ENCODE measurements at regions of chr3 and their contacts with region 1.

Region 1: DNA sequence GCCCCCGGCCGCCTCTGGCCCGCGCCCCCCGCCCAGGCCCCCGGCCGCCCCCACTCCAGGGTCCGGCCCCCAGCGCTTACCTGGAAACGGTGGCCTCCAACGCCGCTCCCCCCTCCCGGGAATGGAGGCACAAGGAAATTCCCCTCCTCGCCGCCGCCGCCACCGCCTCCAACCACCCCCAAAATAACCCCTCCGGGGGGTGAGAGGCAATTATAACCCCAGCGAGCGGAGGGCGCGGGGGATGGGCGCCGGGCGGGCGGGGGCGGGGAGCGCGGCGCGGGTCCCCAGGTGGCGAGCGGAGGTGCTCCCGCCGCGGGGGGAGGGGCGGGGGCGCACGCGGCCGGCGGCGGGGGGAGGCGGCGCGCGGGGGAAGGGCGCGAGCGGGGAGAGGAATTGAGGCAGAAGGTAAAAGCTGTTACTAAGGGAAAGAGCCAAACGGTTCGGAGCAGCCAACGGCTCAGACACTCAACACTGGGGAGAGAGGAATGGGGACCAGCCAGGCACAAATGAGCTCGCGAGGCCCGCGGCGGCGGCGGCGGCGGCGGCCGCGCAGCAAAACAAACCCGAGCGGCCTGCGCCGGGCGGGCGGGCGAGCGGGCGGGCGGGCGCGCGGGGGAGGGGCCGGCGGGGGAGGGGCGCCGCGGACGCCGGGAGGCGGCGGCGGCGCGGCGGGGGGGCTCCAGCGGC is at the start of gene TBL1XR1:
- DNase-seq: peak; percentile 90 to 94
- ATAC-seq: peak; percentile 79 to 91 (median 88)
- H3K4me3 ChIP-seq: peak within 1 kb of the TSS; percentile 64 to 92 (median 84)
- H3K27ac ChIP-seq: peak within 1 kb of the TSS; percentile 96 to 99 (median 98)
- H3K4me1 ChIP-seq: peaks cover 0 to 65% (median 25%) of the 10 kb centered on the region in 9 donors
- H3K27me3 ChIP-seq: no peaks in the 10 kb centered on the region
- CTCF ChIP-seq: no peak
- total RNA-seq, gene TBL1XR1: 79.6 to 184 (median 129) TPM

Region 2: GRCh38 chr3:176872771-176873209 is 324.4 kb before region 1 on chr3:
- intact Hi-C with region 1: no loop called
- DNase-seq: peak in 1 of 2 donors; percentile 45
- ATAC-seq: peak in 7 of 8 donors; percentile 61 to 75 (median 75)
- H3K4me3 ChIP-seq: no peak overlapping the region
- H3K27ac ChIP-seq: no peak overlapping the region
- H3K4me1 ChIP-seq: peaks cover 0 to 11% (median 0%) of the 10 kb centered on the region in 9 donors
- H3K27me3 ChIP-seq: no peaks in the 10 kb centered on the region
- CTCF ChIP-seq: peak; percentile 52 to 80 (median 72)

Region 3: GRCh38 chr3:177050501-177051237 is 146.5 kb before region 1 on chr3:
- intact Hi-C with region 1: loop called in 8 of 10 experiments (anchors 2 to 10 kb)
- DNase-seq: no peak
- ATAC-seq: peak in 7 of 8 donors; percentile 48 to 87 (median 65)
- H3K4me3 ChIP-seq: no peak overlapping the region
- H3K27ac ChIP-seq: no peak overlapping the region
- H3K4me1 ChIP-seq: peaks cover 0 to 23% (median 15%) of the 10 kb centered on the region in 9 donors
- H3K27me3 ChIP-seq: no peaks in the 10 kb centered on the region
- CTCF ChIP-seq: peak in 8 of 9 donors; percentile 29 to 76 (median 62)

Region 4: GRCh38 chr3:177279118-177279815 is 82.1 kb after region 1 on chr3:
- intact Hi-C with region 1: loop called in 2 of 10 experiments (anchors 10 kb)
- DNase-seq: no peak
- ATAC-seq: no peak
- H3K4me3 ChIP-seq: no peak overlapping the region
- H3K27ac ChIP-seq: no peak overlapping the region
- H3K4me1 ChIP-seq: peaks cover 0 to 23% (median 3%) of the 10 kb centered on the region in 9 donors
- H3K27me3 ChIP-seq: no peaks in the 10 kb centered on the region
- CTCF ChIP-seq: no peak

Region 5: GRCh38 chr3:177337541-177338331 is 140.6 kb after region 1 on chr3:
- intact Hi-C with region 1: loop called in 1 of 10 experiments (anchors 5 kb)
- DNase-seq: no peak
- ATAC-seq: no peak
- H3K4me3 ChIP-seq: no peak overlapping the region
- H3K27ac ChIP-seq: peak overlapping the region in 7 of 10 donors; percentile 7 to 92 (median 81)
- H3K4me1 ChIP-seq: peaks cover 4 to 89% (median 58%) of the 10 kb centered on the region in 9 donors
- H3K27me3 ChIP-seq: no peaks in the 10 kb centered on the region
- CTCF ChIP-seq: no peak

Region 6: DNA sequence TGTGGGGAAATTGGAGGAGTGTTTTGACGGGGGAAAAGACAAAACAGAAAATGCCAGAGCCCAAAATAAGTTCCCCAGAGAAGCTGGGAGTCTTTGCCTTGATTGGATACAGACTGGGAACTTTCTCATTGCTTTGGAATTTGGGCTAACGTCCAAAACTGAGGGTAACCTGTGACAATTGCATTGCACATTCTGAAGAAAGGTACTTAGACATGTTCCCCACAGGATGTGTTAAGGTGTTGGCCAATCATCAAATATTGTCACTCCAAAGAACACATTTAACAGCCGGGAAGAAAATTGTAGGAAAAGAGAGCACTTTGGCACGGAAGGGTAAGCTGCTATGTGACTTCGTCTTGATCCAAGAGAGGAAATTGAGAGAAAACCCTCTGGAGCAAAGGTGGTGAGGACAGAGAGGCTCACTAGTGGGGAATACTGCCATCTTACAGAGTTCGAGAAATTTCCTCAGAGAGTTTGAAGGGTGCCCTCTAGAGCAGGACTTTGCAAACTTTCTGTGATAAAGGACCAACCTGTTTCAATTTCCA is 619.6 kb after region 1 on chr3:
- intact Hi-C with region 1: loop called in 1 of 10 experiments (anchors 10 kb)
- DNase-seq: peak in 1 of 2 donors; percentile 45
- ATAC-seq: peak; percentile 53 to 74 (median 67)
- H3K4me3 ChIP-seq: no peak overlapping the region
- H3K27ac ChIP-seq: peak overlapping the region in 8 of 10 donors; percentile 20 to 74 (median 55)
- H3K4me1 ChIP-seq: peaks cover 2 to 69% (median 33%) of the 10 kb centered on the region in 9 donors
- H3K27me3 ChIP-seq: no peaks in the 10 kb centered on the region
- CTCF ChIP-seq: peak in 6 of 9 donors; percentile 9 to 48 (median 32)